A673 (cell line): ENCODE measurements at regions of chr20 and their contacts with region 1.

Region 1: GRCh38 chr20:3407771-3408637 is 535 bp upstream of the DNAAF9 start:
- DNase-seq: peak; percentile 82
- H3K4me3 ChIP-seq: peak overlapping the region; percentile 71
- H3K27ac ChIP-seq: peak overlapping the region; percentile 84
- H3K4me1 ChIP-seq: peaks cover 4% of the 10 kb centered on the region
- H3K27me3 ChIP-seq: no peaks in the 10 kb centered on the region
- CTCF ChIP-seq: no peak

Region 2: GRCh38 chr20:3068986-3069900 is 338.8 kb before region 1 on chr20:
- CTCF ChIA-PET with region 1: no interaction called
- POLR2A ChIA-PET with region 1: no interaction called
- intact Hi-C with region 1: no loop called
- DNase-seq: no peak
- H3K4me3 ChIP-seq: no peak overlapping the region
- H3K27ac ChIP-seq: no peak overlapping the region
- H3K4me1 ChIP-seq: no peaks in the 10 kb centered on the region
- H3K27me3 ChIP-seq: peaks cover 10% of the 10 kb centered on the region
- CTCF ChIP-seq: 0 out of 2 replicates have a peak, but pooled peaks have one; percentile 13

Region 3: DNA sequence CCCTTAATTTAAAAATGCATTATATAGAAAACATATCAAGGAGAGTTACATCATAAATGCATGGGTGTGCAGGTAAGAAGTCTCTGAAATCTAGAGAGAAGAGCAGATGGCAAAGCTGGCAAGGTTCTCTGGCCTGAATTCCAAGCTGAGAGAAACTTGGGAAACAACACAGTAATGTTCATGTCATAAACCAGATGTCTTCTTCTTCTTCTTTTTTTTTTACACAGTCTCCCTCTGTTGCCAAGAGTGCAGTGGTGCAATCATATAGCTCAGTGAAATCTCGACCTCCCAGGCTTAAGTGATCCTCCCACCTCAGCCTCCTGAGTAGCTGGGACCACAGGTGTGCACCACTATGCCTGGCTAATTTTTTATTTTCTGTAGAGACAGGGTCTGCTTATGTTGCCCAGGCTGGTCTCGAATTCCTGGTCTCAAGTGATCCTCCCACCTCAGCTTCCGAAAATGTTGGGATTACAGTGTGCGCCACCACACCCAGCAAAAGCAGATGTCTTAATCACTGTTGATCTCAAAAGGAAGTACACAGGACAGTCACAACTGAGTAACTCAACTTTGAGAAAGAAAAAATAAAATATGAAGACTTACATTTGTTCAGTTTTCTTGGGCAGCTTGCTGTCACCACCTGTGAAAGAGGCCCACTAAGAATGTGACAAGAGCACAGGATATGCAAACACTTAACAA is 77.8 kb before region 1 on chr20:
- CTCF ChIA-PET with region 1: no interaction called
- POLR2A ChIA-PET with region 1: no interaction called
- intact Hi-C with region 1: no loop called
- DNase-seq: peak; percentile 10
- H3K4me3 ChIP-seq: no peak overlapping the region
- H3K27ac ChIP-seq: no peak overlapping the region
- H3K4me1 ChIP-seq: no peaks in the 10 kb centered on the region
- H3K27me3 ChIP-seq: no peaks in the 10 kb centered on the region
- CTCF ChIP-seq: peak; percentile 23; the same call in 1 of the 2 replicates

Region 4: GRCh38 chr20:3461211-3461771 is 53.3 kb after region 1 on chr20:
- CTCF ChIA-PET with region 1: no interaction called
- POLR2A ChIA-PET with region 1: no interaction called
- intact Hi-C with region 1: loop called (anchors 5 kb)
- DNase-seq: peak; percentile 99
- H3K4me3 ChIP-seq: no peak overlapping the region
- H3K27ac ChIP-seq: peak overlapping the region; percentile 85
- H3K4me1 ChIP-seq: peaks cover 32% of the 10 kb centered on the region
- H3K27me3 ChIP-seq: no peaks in the 10 kb centered on the region
- CTCF ChIP-seq: no peak